ENCODE measurements at regions of chr14 and their contacts with region 1.

Region 1: DNA sequence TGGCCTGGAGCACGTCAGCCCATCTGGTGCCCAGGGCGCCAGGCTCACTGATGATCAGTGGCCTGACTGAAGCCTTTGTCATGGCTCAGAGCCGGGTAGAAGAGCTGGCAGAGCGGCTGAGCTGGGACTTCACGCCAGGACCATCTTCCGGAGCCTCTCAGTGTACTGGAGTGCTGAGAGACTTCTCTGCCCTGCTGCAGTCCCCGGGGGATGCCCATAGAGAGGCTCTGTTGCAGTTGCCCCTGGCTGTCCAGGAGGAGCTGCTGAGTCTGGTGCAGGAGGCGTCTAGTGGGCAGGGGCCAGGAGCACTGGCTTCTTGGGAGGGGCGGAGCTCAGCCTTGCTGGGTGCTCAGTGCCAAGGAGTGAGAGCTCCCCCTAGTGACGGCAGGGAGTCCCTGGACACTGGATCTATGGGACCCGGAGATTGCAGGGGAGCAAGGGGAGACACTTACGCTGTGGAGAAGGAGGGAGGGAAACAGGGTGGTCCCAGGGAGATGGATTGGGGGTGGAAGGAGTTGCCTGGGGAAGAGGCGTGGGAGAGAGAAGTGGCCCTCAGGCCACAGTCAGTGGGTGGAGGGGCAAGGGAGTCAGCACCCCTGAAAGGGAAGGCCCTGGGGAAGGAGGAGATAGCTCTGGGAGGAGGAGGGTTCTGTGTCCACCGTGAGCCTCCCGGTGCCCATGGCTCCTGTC is 2.0 kb downstream of the KHNYN start:
- DNase-seq: peak; percentile 83 to 96
- H3K4me3 ChIP-seq: no peak overlapping the region
- CTCF ChIP-seq: peak in 1 of 3 donors; percentile 96
- POLR2A ChIP-seq: no peak

Region 2: GRCh38 chr14:23929822-23930294 is 501.9 kb before region 1 on chr14:
- intact Hi-C with region 1: no loop called
- DNase-seq: peak; percentile 69 to 95
- H3K4me3 ChIP-seq: no peak overlapping the region
- CTCF ChIP-seq: peak in 1 of 3 donors; percentile 26
- POLR2A ChIP-seq: no peak

Region 3: DNA sequence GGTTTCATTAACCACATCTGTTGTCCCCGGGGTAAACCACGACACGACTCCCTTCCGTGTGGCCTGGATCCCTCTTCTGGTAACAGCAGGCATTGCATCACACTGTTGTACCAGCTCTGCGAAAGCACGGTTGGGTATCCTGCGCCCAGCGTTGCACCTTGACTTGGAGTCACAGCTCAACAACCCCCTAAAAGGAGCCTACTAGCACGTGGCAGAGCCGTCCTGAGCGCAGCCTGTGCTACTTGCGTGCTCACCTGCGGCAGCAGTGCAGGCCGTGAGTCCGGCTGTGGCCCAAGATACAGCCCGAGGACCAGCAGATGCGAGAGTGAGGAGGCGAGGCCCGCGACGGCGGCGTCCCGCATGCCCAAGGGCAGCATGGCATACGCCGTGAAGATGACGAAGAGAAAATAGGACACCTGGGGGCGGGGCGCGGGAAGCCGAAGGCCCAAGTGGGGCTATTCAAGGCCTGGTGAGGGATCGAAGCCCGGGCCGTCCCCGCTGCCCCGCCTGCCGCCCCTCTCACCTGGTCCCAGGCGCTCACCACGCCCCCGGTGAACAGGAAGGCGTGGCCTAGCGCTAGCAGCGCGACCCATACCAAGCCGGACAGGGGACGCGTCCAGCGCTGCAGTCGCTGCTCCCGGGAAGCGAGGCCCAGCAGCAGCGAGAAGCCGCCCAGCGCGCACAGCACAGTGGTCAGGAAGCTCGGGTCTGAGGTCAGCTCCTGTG is 99.3 kb before region 1 on chr14:
- intact Hi-C with region 1: loop called (anchors 2 kb)
- DNase-seq: peak in 1 of 2 donors; percentile 91
- H3K4me3 ChIP-seq: no peak overlapping the region
- CTCF ChIP-seq: peak in 1 of 3 donors; percentile 86
- POLR2A ChIP-seq: no peak

Region 4: GRCh38 chr14:24351517-24351916 is 80.2 kb before region 1 on chr14:
- intact Hi-C with region 1: no loop called
- DNase-seq: no peak
- H3K4me3 ChIP-seq: no peak overlapping the region
- CTCF ChIP-seq: no peak
- POLR2A ChIP-seq: no peak

Region 5: GRCh38 chr14:24366721-24367513 is 64.8 kb before region 1 on chr14:
- intact Hi-C with region 1: loop called (anchors 5 kb)
- DNase-seq: peak; percentile 87 to 98
- H3K4me3 ChIP-seq: peak overlapping the region; percentile 10
- CTCF ChIP-seq: peak in 1 of 3 donors; percentile 15
- POLR2A ChIP-seq: no peak

Region 6: GRCh38 chr14:24398653-24399446 is 32.9 kb before region 1 on chr14 and contains the start of gene NYNRIN:
- intact Hi-C with region 1: no loop called
- DNase-seq: peak in 1 of 2 donors; percentile 87
- H3K4me3 ChIP-seq: peak within 1 kb of the TSS; percentile 40
- CTCF ChIP-seq: no peak
- POLR2A ChIP-seq: no peak
- total RNA-seq, gene NYNRIN: 17.7 to 37.8 (median 23.5) TPM

Region 7: DNA sequence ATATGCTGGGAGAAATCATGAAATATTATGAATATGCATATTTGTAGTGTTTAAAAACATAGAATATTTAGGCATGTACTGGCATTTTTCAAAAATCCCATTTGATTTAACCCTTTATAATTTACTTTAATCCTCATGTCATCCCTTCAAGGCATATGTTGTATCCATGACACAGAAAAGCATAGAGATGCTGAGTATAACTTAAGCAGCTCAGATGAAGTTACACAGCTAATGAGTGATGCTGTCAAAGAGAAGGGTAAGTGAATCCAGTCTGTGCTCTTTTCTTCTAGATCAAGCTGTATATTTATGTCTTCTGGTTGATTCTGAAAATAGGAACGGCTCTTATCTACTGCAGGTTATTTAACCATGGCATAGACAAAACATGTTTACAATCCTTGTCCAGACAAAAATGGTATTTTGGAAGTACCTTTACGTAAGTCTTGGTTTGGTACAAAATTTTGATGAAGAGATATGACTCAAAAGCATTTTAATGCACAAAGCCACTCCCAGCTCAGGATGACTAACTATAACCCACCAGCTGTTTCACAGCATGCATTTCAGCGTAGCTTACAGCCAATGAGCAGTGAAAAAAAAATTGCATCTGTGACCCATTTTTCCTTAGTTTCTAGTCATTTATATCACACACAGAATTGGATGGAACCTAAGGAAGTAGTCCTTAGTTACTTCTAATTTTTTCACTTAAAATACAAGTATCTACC is 416.5 kb after region 1 on chr14:
- intact Hi-C with region 1: no loop called
- DNase-seq: no peak
- H3K4me3 ChIP-seq: no peak overlapping the region
- CTCF ChIP-seq: no peak
- POLR2A ChIP-seq: no peak

Measured in lower leg skin (tissue), 4 donors.